GM12878 (cell line): ENCODE measurements at regions of chr10 and their contacts with region 1.

Region 1: DNA sequence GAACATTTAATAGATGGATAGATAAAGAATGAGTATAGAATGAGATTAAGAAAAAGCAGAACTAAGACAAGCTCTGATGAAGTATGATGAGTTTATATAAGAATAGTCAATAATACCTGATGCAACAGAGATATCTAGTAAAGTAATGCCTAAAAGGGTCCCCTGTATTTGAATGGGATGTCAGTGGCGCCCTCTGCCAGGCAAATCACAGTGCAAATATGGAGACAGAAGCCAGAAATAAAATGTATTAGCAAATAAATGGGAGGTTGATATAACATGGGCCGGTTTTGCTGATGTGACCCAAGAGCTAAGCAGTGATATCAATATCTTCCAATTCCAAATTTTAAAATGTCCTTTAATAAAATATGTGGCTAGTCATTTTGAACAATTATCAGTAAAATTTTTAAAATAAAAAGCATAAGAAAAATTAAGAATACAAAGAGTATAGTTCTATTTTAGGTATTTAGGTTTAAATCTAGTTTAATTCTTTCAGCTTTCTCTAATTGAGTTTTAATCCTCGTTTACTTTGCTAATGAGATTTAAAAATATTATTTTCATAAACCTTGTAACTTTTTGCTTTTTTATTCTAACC is 62.6 kb downstream of the ADK start:
- DNase-seq: no peak
- ATAC-seq: peak; percentile 73
- H3K4me3 ChIP-seq: no peak overlapping the region
- H3K27ac ChIP-seq: no peak overlapping the region
- H3K4me1 ChIP-seq: no peaks in the 10 kb centered on the region
- H3K27me3 ChIP-seq: no peaks in the 10 kb centered on the region
- CTCF ChIP-seq: peak; percentile 27 to 49 (median 30); a peak in 4 of 6 replicates
- EP300 ChIP-seq: no peak
- POLR2A ChIP-seq: no peak
- RAD21 ChIP-seq: peak; percentile 61

Region 2: DNA sequence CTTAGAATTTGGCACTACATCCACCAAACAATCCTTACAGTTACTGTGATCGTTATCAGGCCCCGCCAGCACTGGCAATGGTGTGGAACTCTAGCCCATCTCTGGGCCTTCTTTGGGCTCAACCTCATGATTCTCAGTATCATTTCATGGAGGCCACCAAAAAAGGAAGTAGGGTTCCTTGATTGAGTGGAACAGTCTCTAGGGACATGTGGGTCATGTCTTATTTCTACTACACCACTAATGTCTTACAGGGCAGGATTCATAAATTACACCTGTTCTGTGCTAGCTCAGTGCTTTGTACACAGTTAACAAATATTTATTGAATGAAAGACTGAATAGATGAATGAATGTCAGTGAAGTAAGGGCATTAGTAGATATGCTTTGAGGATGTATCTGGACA is 116.9 kb before region 1 on chr10:
- CTCF ChIA-PET with region 1: interaction called, 11 read pairs
- POLR2A ChIA-PET with region 1: no interaction called
- RAD21 ChIA-PET with region 1: no interaction called
- SMC1A ChIA-PET with region 1: interaction called, 3 read pairs
- in situ Hi-C with region 1: no loop called
- intact Hi-C with region 1: no loop called
- DNase-seq: peak; percentile 69
- ATAC-seq: peak; percentile 99
- H3K4me3 ChIP-seq: no peak overlapping the region
- H3K27ac ChIP-seq: peak overlapping the region; percentile 30; the same call in 1 of the 2 replicates
- H3K4me1 ChIP-seq: peaks cover 8% of the 10 kb centered on the region
- H3K27me3 ChIP-seq: no peaks in the 10 kb centered on the region
- CTCF ChIP-seq: no peak
- EP300 ChIP-seq: 0 out of 4 replicates have a peak, but pooled peaks of 1 of the 2 experiments have one; percentile 59
- POLR2A ChIP-seq: no peak
- RAD21 ChIP-seq: no peak

Region 3: GRCh38 chr10:74137992-74138391 is 75.7 kb before region 1 on chr10:
- CTCF ChIA-PET with region 1: interaction called, 10 read pairs
- POLR2A ChIA-PET with region 1: no interaction called
- RAD21 ChIA-PET with region 1: interaction called, 5 read pairs
- SMC1A ChIA-PET with region 1: interaction called, 7 read pairs
- in situ Hi-C with region 1: no loop called
- intact Hi-C with region 1: no loop called
- DNase-seq: no peak
- ATAC-seq: no peak
- H3K4me3 ChIP-seq: no peak overlapping the region
- H3K27ac ChIP-seq: no peak overlapping the region
- H3K4me1 ChIP-seq: no peaks in the 10 kb centered on the region
- H3K27me3 ChIP-seq: no peaks in the 10 kb centered on the region
- CTCF ChIP-seq: no peak
- EP300 ChIP-seq: no peak
- POLR2A ChIP-seq: no peak
- RAD21 ChIP-seq: no peak

Region 4: GRCh38 chr10:74156919-74157289 is 56.8 kb before region 1 on chr10:
- CTCF ChIA-PET with region 1: interaction called, 30 read pairs
- POLR2A ChIA-PET with region 1: no interaction called
- RAD21 ChIA-PET with region 1: interaction called, 6 read pairs
- SMC1A ChIA-PET with region 1: interaction called, 23 read pairs
- in situ Hi-C with region 1: no loop called
- intact Hi-C with region 1: no loop called
- DNase-seq: no peak
- ATAC-seq: peak; percentile 69
- H3K4me3 ChIP-seq: 0 out of 2 replicates have a peak overlapping the region, but pooled peaks have one; percentile 10
- H3K27ac ChIP-seq: peak overlapping the region; percentile 38; the same call in 1 of the 2 replicates
- H3K4me1 ChIP-seq: peaks cover 14% of the 10 kb centered on the region
- H3K27me3 ChIP-seq: no peaks in the 10 kb centered on the region
- CTCF ChIP-seq: no peak
- EP300 ChIP-seq: no peak
- POLR2A ChIP-seq: no peak
- RAD21 ChIP-seq: no peak

Region 5: DNA sequence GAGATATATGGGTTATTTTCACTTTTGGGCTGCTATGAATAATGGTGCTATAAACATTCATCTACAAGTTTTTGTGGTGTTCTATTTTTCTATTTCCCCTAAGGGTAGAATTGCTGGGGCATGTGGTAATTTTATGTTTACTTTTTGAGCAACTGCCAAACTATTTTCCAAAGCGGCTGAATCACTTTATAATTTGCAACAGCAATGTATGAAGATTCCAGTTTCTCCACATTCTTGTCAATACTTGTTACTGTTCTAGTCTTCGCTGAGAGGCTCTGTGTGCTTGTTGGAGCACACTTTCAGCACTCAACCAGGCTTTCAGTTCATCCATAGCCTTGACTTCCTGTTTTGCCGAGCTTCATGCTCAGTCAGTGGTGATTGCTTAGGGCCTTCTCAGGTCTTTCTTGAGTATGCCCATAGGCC is 23.7 kb before region 1 on chr10:
- CTCF ChIA-PET with region 1: interaction called, 15 read pairs
- POLR2A ChIA-PET with region 1: no interaction called
- RAD21 ChIA-PET with region 1: interaction called, 7 read pairs
- SMC1A ChIA-PET with region 1: interaction called, 29 read pairs
- in situ Hi-C with region 1: no loop called
- intact Hi-C with region 1: no loop called
- DNase-seq: peak; percentile 49
- ATAC-seq: peak; percentile 94
- H3K4me3 ChIP-seq: peak overlapping the region; percentile 64
- H3K27ac ChIP-seq: peak overlapping the region; percentile 76
- H3K4me1 ChIP-seq: no peaks in the 10 kb centered on the region; the same call in 1 of the 2 replicates
- H3K27me3 ChIP-seq: no peaks in the 10 kb centered on the region
- CTCF ChIP-seq: no peak
- EP300 ChIP-seq: no peak
- POLR2A ChIP-seq: peak; percentile 44; the same call in 1 of the 2 replicates
- RAD21 ChIP-seq: no peak

Region 6: DNA sequence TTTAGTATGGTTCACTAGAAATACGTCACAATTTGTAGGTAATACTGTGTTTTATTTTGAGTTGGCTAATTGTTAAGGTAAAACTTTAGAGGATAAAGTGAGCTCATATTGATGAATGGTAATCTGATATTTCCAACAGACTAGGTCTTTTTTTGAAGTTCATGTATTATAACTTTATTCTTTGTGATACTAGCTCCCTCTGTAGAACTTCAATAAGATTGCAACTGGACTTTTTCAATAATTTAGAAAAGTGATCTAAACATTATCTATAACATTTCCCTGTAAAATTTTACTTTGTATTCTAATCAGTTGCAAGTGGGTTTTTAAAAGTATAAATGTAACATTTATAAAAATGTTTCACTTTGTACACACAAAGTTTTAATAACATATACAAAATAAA is 20.9 kb after region 1 on chr10:
- CTCF ChIA-PET with region 1: interaction called, 3 read pairs
- POLR2A ChIA-PET with region 1: no interaction called
- RAD21 ChIA-PET with region 1: interaction called, 3 read pairs
- SMC1A ChIA-PET with region 1: interaction called, 17 read pairs
- in situ Hi-C with region 1: no loop called
- intact Hi-C with region 1: no loop called
- DNase-seq: no peak
- ATAC-seq: no peak; the same call in 2 of the 3 replicates
- H3K4me3 ChIP-seq: no peak overlapping the region
- H3K27ac ChIP-seq: no peak overlapping the region
- H3K4me1 ChIP-seq: no peaks in the 10 kb centered on the region
- H3K27me3 ChIP-seq: no peaks in the 10 kb centered on the region
- CTCF ChIP-seq: peak in 2 of 3 experiments; percentile 35 to 43; a peak in 2 of 6 replicates
- EP300 ChIP-seq: no peak
- POLR2A ChIP-seq: no peak
- RAD21 ChIP-seq: peak; percentile 39

Region 7: GRCh38 chr10:74612195-74612594 is 398.5 kb after region 1 on chr10:
- CTCF ChIA-PET with region 1: no interaction called
- POLR2A ChIA-PET with region 1: no interaction called
- RAD21 ChIA-PET with region 1: no interaction called
- SMC1A ChIA-PET with region 1: no interaction called
- in situ Hi-C with region 1: no loop called
- intact Hi-C with region 1: no loop called
- DNase-seq: no peak
- ATAC-seq: no peak
- H3K4me3 ChIP-seq: no peak overlapping the region
- H3K27ac ChIP-seq: no peak overlapping the region
- H3K4me1 ChIP-seq: no peaks in the 10 kb centered on the region
- H3K27me3 ChIP-seq: no peaks in the 10 kb centered on the region
- CTCF ChIP-seq: no peak
- EP300 ChIP-seq: no peak
- POLR2A ChIP-seq: no peak
- RAD21 ChIP-seq: no peak